ENCODE measurements at regions of chr1 and their contacts with region 1.

Region 1: GRCh38 chr1:152001391-152002249 is 8.0 kb upstream of the S100A10 start:
- DNase-seq: peak; percentile 100
- H3K4me3 ChIP-seq: no peak overlapping the region
- H3K27ac ChIP-seq: peak overlapping the region; percentile 96
- H3K4me1 ChIP-seq: peaks cover 73% of the 10 kb centered on the region
- H3K27me3 ChIP-seq: no peaks in the 10 kb centered on the region
- CTCF ChIP-seq: peak; percentile 92 to 96

Region 2: DNA sequence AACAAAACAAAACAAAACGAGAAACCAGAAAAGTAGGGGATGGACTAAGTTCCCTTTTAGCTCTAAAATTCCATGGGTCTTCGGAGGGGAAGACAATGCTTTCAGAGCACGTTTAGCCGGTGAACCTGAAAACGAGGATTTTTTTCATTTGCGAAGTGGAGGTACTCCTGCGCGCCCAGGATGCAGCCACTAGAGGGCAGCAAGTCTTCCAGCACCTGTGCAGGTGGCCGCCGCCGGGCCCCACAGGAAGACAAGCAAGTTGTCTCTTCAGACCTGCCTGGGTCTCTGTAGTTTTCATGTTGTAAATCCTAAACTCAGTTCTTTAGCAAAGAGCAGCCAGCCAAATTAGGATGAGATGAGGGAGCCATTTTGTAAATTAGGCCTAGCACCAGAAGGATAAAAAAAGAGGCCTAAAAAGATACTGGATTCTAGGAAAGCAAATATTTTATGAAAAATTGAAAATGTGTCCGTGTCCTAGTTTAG is 407.4 kb before region 1 on chr1:
- CTCF ChIA-PET with region 1: no interaction called
- dilution Hi-C with region 1: no loop called
- in situ Hi-C with region 1: no loop called
- intact Hi-C with region 1: loop called (anchors 10 kb)
- DNase-seq: peak; percentile 61
- H3K4me3 ChIP-seq: no peak overlapping the region
- H3K27ac ChIP-seq: no peak overlapping the region
- H3K4me1 ChIP-seq: no peaks in the 10 kb centered on the region
- H3K27me3 ChIP-seq: no peaks in the 10 kb centered on the region
- CTCF ChIP-seq: peak; percentile 93 to 98

Region 3: DNA sequence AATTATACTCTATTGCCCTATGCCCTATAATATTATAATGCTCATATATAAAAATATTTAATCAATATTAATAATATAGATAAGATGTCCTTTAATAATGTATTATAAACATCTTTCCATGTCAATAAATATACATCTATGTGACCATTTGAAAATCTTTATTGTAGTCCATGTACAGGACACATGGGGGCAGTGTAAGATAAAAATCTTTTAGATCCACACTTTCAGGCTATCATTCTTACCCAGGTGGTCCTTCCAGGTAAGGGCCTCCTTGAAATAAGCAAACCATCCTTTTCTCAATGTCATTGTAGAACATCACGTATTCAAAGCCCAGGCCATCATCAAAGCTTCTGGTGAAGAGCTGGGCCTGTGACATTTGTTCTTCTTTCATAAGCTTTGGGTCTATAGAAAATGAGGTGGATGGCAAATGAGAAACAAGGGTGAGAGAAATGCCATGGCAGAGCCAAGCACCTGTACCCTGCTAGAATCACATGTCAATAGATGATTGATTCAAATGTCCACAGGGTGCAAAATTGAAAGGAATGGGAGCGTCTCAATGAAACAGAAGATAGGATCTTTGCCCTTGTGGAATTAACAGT is 112.5 kb before region 1 on chr1:
- CTCF ChIA-PET with region 1: interaction called, 3 read pairs
- dilution Hi-C with region 1: no loop called
- in situ Hi-C with region 1: no loop called
- intact Hi-C with region 1: loop called (anchors 1 kb)
- DNase-seq: no peak
- H3K4me3 ChIP-seq: no peak overlapping the region
- H3K27ac ChIP-seq: no peak overlapping the region
- H3K4me1 ChIP-seq: peaks cover 30% of the 10 kb centered on the region
- H3K27me3 ChIP-seq: no peaks in the 10 kb centered on the region
- CTCF ChIP-seq: peak; percentile 15 to 49

Region 4: DNA sequence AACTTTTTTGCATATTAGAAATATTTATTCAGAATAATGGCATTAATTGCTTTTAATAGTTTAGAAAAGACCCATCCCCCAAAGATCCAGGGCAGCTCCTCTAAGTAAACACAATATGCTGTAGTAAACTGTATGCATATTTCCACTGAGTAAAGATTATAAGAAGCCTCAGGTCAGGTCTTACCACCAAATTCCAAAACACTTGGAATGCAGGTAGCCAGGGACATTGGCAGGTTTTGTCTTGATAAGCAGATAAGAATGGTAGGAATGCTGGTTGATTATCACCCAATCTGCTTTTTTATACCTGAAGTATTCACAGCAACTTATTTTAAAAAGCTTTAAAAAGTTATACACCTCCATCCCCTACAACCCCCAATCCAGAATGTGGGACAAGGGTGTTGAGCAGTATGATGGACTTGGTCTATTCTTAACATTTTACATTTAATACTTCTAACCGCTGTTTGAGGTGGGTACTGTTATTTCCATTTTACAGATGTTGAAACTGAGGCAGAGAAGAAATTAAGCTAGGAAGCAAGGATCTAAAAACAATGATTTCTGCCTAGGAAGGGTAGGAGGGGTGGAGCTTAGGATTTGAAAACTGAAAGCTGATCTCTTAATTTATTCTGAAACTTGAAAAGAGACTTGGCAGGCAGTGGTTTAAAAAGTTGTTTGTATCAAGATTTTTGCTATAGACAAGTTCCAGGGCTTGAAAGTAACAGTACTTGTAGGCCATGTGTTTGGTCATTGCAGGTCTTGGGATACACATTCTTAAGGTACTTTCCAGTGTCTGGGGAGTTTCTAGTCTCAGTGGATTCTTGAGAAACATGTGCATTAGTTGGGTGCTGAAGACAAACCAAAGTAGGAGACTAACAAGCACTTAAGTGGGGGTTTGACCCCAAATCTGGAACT is 76.7 kb before region 1 on chr1:
- CTCF ChIA-PET with region 1: no interaction called
- dilution Hi-C with region 1: no loop called
- in situ Hi-C with region 1: loop called in 1 of 2 experiments (anchors 10 kb)
- intact Hi-C with region 1: no loop called
- DNase-seq: no peak
- H3K4me3 ChIP-seq: no peak overlapping the region
- H3K27ac ChIP-seq: no peak overlapping the region
- H3K4me1 ChIP-seq: peaks cover 9% of the 10 kb centered on the region
- H3K27me3 ChIP-seq: no peaks in the 10 kb centered on the region
- CTCF ChIP-seq: no peak

Region 5: GRCh38 chr1:151945725-151946364 is 55.8 kb before region 1 on chr1:
- CTCF ChIA-PET with region 1: interaction called, 4 read pairs
- dilution Hi-C with region 1: no loop called
- in situ Hi-C with region 1: loop called in 1 of 2 experiments (anchors 10 kb)
- intact Hi-C with region 1: loop called (anchors 1 kb)
- DNase-seq: peak; percentile 98
- H3K4me3 ChIP-seq: peak overlapping the region in 2 of 3 experiments; percentile 5 to 11
- H3K27ac ChIP-seq: peak overlapping the region; percentile 99
- H3K4me1 ChIP-seq: peaks cover 47% of the 10 kb centered on the region
- H3K27me3 ChIP-seq: no peaks in the 10 kb centered on the region
- CTCF ChIP-seq: no peak

Region 6: DNA sequence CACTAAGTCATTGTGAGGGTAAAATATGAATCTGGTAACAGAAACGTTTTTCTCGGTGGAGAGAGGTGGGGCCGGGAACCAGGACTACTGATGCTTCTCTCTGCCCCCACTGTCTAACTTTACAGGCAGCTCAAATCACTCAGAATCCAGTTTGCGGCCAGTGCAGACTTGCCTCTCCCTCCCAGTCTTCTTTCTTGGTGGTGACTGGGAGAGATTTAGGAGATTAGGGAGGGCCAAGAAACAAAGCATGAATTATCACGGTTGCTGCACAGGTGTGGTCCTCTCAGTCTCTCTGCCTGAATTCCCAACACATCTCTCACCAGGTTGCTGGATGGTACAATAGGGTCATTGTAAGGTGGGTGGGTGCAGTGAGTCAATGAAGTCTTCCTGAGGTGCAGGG is 22.5 kb after region 1 on chr1:
- CTCF ChIA-PET with region 1: interaction called, 5 read pairs
- dilution Hi-C with region 1: no loop called
- in situ Hi-C with region 1: no loop called
- intact Hi-C with region 1: loop called (anchors 1 kb)
- DNase-seq: peak; percentile 100
- H3K4me3 ChIP-seq: no peak overlapping the region
- H3K27ac ChIP-seq: peak overlapping the region; percentile 99
- H3K4me1 ChIP-seq: peaks cover 60% of the 10 kb centered on the region
- H3K27me3 ChIP-seq: no peaks in the 10 kb centered on the region
- CTCF ChIP-seq: no peak

Region 7: GRCh38 chr1:152189657-152190442 is 188.2 kb after region 1 on chr1:
- CTCF ChIA-PET with region 1: no interaction called
- dilution Hi-C with region 1: no loop called
- in situ Hi-C with region 1: no loop called
- intact Hi-C with region 1: loop called (anchors 2 kb)
- DNase-seq: peak; percentile 66
- H3K4me3 ChIP-seq: peak overlapping the region in 1 of 3 experiments; percentile 41
- H3K27ac ChIP-seq: no peak overlapping the region
- H3K4me1 ChIP-seq: peaks cover 49% of the 10 kb centered on the region
- H3K27me3 ChIP-seq: no peaks in the 10 kb centered on the region
- CTCF ChIP-seq: peak; percentile 81 to 84

Region 8: GRCh38 chr1:152497273-152497672 is 495.7 kb after region 1 on chr1:
- CTCF ChIA-PET with region 1: no interaction called
- dilution Hi-C with region 1: no loop called
- in situ Hi-C with region 1: no loop called
- intact Hi-C with region 1: no loop called
- DNase-seq: no peak
- H3K4me3 ChIP-seq: no peak overlapping the region
- H3K27ac ChIP-seq: no peak overlapping the region
- H3K4me1 ChIP-seq: peaks cover 12% of the 10 kb centered on the region
- H3K27me3 ChIP-seq: no peaks in the 10 kb centered on the region
- CTCF ChIP-seq: peak; percentile 54 to 77